ENCODE measurements at regions of chr2 and their contacts with region 1.

Region 1: GRCh38 chr2:76599732-76600368 is 889.1 kb upstream of the GCFC2 start:
- DNase-seq: peak; percentile 93
- ATAC-seq: peak; percentile 100
- H3K4me3 ChIP-seq: no peak overlapping the region
- H3K27ac ChIP-seq: no peak overlapping the region
- H3K4me1 ChIP-seq: no peaks in the 10 kb centered on the region
- H3K27me3 ChIP-seq: no peaks in the 10 kb centered on the region
- CTCF ChIP-seq: peak; percentile 91
- EP300 ChIP-seq: no peak
- POLR2A ChIP-seq: no peak
- RAD21 ChIP-seq: peak; percentile 91

Region 2: DNA sequence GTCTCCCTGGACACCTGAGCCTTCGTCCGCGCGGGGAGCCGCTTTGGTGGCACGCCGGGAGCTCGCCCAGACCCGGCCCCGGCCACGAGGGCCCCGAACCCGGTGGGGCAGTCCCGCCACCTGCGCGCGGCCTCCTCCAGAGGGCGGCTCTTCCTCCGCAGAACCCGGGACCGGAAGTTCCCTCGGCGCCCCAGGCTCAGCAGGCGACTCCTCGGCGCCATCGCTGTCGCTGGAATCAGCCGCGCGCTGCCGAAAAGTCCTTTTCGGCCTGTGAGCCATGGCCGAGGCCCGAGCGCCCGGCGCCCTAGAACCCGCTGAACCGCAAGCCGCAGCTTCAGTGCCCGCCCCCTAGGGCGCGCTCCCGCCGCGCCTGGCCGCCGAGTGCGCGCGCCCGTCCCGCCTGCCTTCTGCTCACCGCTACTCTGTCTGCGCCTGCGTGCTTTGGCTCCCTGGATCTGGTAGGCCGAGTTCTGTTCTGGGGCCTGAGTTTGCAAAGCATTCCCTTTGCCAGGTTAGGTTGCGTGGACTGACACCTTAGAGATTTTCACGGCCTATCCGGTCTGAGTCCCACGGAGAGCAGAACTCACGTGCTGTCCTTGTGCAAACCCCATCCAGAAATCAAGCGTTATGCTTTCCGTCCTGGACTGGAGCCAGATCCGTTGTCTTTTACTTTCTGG is 889.1 kb before region 1 on chr2 and contains the start of gene GCFC2:
- CTCF ChIA-PET with region 1: no interaction called
- POLR2A ChIA-PET with region 1: no interaction called
- in situ Hi-C with region 1: no loop called
- intact Hi-C with region 1: loop called (anchors 10 kb)
- DNase-seq: peak; percentile 90
- ATAC-seq: peak; percentile 97
- H3K4me3 ChIP-seq: peak within 1 kb of the TSS; percentile 66 to 75 (median 67)
- H3K27ac ChIP-seq: peak within 1 kb of the TSS; percentile 94
- H3K4me1 ChIP-seq: peaks cover 43% of the 10 kb centered on the region
- H3K27me3 ChIP-seq: no peaks in the 10 kb centered on the region; a peak in 1 of 5 replicates
- CTCF ChIP-seq: peak; percentile 76
- EP300 ChIP-seq: no peak; a peak in 2 of 4 replicates
- POLR2A ChIP-seq: peak; percentile 87 to 91
- RAD21 ChIP-seq: peak; percentile 74; the same call in 1 of the 2 replicates
- total RNA-seq, gene GCFC2: 49.0 and 65.8 TPM in 2 replicates

Region 3: DNA sequence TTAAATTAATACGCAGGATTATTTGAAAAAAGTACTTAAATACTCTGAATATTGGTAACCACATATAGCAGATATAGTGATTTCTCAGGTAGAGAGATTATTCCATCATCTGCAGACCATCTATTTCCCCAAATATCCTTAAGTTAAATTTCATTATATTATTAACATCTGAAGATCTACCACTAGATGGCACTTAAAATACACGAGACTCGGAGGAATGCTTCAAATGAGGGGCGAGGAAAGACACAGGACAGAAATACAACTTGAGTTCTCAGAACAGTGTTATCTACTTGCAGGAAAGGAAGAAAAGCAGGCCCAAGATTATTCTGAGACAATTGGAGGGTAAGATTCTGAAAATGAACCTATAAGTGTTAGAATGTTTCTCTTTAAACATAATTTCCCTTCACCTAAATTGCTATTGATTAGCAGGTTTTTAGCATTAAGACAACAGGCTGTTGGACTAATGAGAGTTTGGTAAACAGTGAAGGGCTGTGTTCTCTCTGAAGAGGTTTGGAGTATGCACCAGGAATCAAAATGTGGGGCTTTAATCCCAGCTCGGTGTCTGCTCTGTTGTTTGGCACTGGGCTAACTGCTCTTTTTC is 812.2 kb before region 1 on chr2:
- CTCF ChIA-PET with region 1: interaction called, 33 read pairs
- POLR2A ChIA-PET with region 1: no interaction called
- in situ Hi-C with region 1: loop called (anchors 5 kb)
- intact Hi-C with region 1: loop called (anchors 1 kb)
- DNase-seq: peak; percentile 44
- ATAC-seq: peak; percentile 81
- H3K4me3 ChIP-seq: no peak overlapping the region
- H3K27ac ChIP-seq: no peak overlapping the region
- H3K4me1 ChIP-seq: no peaks in the 10 kb centered on the region
- H3K27me3 ChIP-seq: peaks cover 0 to 2% of the 10 kb centered on the region in 2 experiments; a peak in 1 of 5 replicates
- CTCF ChIP-seq: peak; percentile 70
- EP300 ChIP-seq: no peak
- POLR2A ChIP-seq: no peak
- RAD21 ChIP-seq: 0 out of 2 replicates have a peak, but pooled peaks have one; percentile 26

Region 4: DNA sequence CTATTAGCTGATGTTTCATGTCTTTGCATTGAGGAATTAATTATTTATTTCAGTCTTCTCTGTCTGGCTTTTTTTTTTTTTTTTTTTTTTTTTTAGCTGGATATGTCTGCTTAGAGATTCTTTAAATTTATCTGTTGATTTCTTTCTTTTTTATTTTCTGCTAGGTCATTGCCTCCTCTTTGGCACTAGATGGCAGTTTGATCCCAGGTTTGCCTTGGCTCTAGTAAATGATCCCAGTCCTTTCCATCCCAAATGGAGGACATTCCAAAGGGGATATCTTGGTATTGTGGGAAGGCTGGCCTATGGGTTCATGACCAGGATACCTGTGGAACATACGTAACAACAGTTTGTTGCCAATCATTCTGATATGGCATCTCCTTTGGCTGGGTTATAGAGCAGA is 549.7 kb before region 1 on chr2:
- CTCF ChIA-PET with region 1: interaction called, 10 read pairs
- POLR2A ChIA-PET with region 1: no interaction called
- in situ Hi-C with region 1: no loop called
- intact Hi-C with region 1: loop called (anchors 1 kb)
- DNase-seq: peak; percentile 10
- ATAC-seq: no peak
- H3K4me3 ChIP-seq: no peak overlapping the region
- H3K27ac ChIP-seq: no peak overlapping the region
- H3K4me1 ChIP-seq: no peaks in the 10 kb centered on the region
- H3K27me3 ChIP-seq: no peaks in the 10 kb centered on the region
- CTCF ChIP-seq: peak; percentile 58
- EP300 ChIP-seq: no peak
- POLR2A ChIP-seq: no peak
- RAD21 ChIP-seq: no peak

Region 5: DNA sequence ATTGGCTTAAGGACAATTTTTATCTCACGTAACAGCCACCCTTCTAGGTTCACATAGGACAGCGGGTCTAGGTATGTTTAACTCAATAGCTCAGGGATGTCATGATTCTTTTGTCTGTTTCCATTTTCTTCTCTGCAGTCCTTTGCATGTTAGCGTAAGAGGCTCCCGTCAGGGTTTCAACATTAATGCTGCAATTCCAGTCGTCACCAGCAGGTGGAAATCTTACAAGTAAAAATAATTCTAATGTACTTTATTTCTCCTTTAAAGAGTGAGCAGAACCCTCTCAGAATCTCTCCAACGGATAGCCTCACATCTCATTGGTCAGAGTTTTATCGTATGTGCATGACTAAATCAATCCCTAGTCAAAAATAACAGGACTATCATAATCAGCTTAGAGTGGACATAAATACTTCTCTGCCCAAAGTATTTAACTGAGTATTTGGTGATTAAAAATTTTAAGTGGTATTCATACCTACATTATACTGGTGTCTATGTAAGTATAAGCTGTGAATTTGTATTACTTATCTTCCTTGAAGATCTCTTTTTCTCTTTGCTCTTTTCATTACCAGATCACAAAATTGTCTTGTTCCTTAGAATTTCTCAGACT is 401.9 kb before region 1 on chr2:
- CTCF ChIA-PET with region 1: interaction called, 23 read pairs
- POLR2A ChIA-PET with region 1: no interaction called
- in situ Hi-C with region 1: no loop called
- intact Hi-C with region 1: loop called (anchors 1 kb)
- DNase-seq: peak; percentile 72
- ATAC-seq: peak; percentile 62
- H3K4me3 ChIP-seq: no peak overlapping the region
- H3K27ac ChIP-seq: no peak overlapping the region
- H3K4me1 ChIP-seq: peaks cover 28% of the 10 kb centered on the region
- H3K27me3 ChIP-seq: no peaks in the 10 kb centered on the region
- CTCF ChIP-seq: peak; percentile 67
- EP300 ChIP-seq: no peak
- POLR2A ChIP-seq: no peak
- RAD21 ChIP-seq: peak; percentile 63

Region 6: DNA sequence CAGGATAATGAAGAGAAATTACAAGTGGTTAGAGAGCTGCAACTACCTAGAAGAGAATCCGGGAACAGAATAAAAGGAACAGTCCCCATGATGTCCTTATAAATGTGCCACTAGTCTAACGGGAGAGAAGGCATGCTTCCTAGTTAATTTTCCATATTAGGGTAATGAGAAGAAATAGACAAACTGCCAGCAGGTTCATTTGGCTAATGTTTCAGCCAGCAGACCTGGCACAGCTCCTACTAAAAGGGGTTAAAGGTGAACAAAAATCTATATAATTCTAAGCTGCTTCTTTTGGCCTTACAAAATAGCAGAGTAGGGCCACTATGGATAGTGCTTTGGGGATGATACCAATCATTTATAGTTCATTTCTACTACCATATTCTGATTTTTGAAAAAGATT is 43.8 kb before region 1 on chr2:
- CTCF ChIA-PET with region 1: no interaction called
- POLR2A ChIA-PET with region 1: no interaction called
- in situ Hi-C with region 1: no loop called
- intact Hi-C with region 1: no loop called
- DNase-seq: no peak
- ATAC-seq: no peak
- H3K4me3 ChIP-seq: no peak overlapping the region
- H3K27ac ChIP-seq: no peak overlapping the region
- H3K4me1 ChIP-seq: no peaks in the 10 kb centered on the region
- H3K27me3 ChIP-seq: no peaks in the 10 kb centered on the region
- CTCF ChIP-seq: no peak
- EP300 ChIP-seq: no peak
- POLR2A ChIP-seq: no peak
- RAD21 ChIP-seq: no peak

Region 7: GRCh38 chr2:76633276-76633921 is 33.5 kb after region 1 on chr2:
- CTCF ChIA-PET with region 1: no interaction called
- POLR2A ChIA-PET with region 1: no interaction called
- in situ Hi-C with region 1: no loop called
- intact Hi-C with region 1: no loop called
- DNase-seq: no peak
- ATAC-seq: no peak
- H3K4me3 ChIP-seq: no peak overlapping the region
- H3K27ac ChIP-seq: no peak overlapping the region
- H3K4me1 ChIP-seq: no peaks in the 10 kb centered on the region
- H3K27me3 ChIP-seq: no peaks in the 10 kb centered on the region
- CTCF ChIP-seq: no peak
- EP300 ChIP-seq: no peak
- POLR2A ChIP-seq: no peak
- RAD21 ChIP-seq: no peak

Measured in HepG2 (cell line).